ENCODE measurements at regions of chr6 and their contacts with region 1.

Region 1: DNA sequence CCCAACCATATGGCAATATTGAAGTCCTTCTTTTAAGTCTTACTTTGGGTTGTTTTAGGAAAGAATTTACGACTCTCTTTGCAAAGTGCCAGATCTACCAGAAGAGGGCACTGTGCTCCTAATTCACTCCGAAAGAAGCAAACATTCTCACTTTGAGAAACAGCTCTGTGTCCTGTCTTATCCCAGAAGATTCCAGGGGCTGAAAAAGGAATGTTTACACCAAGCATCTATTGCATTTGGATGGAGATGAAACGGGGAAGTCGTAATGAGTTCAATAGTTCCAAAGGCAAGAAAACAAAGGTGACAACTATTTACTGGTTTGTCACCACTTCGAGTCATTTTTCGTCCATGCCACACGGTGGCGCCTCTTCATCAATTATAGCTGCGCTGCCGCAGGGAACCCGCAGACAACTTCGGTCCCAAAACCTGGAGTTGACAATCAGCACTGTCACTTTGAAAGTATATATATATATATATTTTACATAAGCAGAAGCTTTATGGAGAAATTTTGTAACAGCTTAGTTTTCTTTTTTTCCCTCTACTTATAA is 121.6 kb downstream of the MOXD1 start:
- DNase-seq: peak; percentile 43
- H3K4me3 ChIP-seq: peak overlapping the region; percentile 49 to 78
- H3K27ac ChIP-seq: no peak overlapping the region
- H3K4me1 ChIP-seq: no peaks in the 10 kb centered on the region; a peak in 1 of 4 replicates
- H3K27me3 ChIP-seq: peaks cover 4% of the 10 kb centered on the region
- CTCF ChIP-seq: peak; percentile 98
- EP300 ChIP-seq: no peak
- RAD21 ChIP-seq: peak; percentile 69

Region 2: DNA sequence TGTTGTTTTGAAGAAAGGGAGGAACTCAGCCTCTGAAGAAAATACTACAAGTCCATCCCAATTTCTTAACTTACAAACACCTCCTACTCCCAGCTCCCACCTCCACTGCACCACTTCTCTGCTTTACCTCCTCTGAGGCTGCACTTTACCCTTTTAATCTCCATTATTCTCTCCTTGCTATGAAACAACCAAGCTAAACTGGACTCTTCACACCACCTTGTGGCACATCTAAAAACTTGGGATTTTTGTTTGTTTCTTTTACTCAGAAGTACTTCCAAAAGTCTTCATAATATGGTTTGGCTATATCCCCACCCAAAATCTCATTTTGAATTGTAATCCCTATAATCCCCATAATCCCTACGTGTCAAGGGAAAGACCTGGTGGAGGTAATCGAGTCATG is 20.6 kb before region 1 on chr6:
- CTCF ChIA-PET with region 1: interaction called, 114 read pairs
- POLR2A ChIA-PET with region 1: no interaction called
- DNase-seq: no peak
- H3K4me3 ChIP-seq: no peak overlapping the region
- H3K27ac ChIP-seq: no peak overlapping the region
- H3K4me1 ChIP-seq: no peaks in the 10 kb centered on the region
- H3K27me3 ChIP-seq: peaks cover 7% of the 10 kb centered on the region; the same call in 1 of the 2 replicates
- CTCF ChIP-seq: peak; percentile 54
- EP300 ChIP-seq: no peak
- RAD21 ChIP-seq: peak; percentile 24; the same call in 1 of the 2 replicates

Region 3: GRCh38 chr6:132320007-132320406 is 40.3 kb after region 1 on chr6:
- CTCF ChIA-PET with region 1: interaction called, 16 read pairs
- POLR2A ChIA-PET with region 1: no interaction called
- DNase-seq: no peak
- H3K4me3 ChIP-seq: no peak overlapping the region
- H3K27ac ChIP-seq: no peak overlapping the region; a peak in 1 of 4 replicates
- H3K4me1 ChIP-seq: no peaks in the 10 kb centered on the region; a peak in 1 of 4 replicates
- H3K27me3 ChIP-seq: no peaks in the 10 kb centered on the region
- CTCF ChIP-seq: no peak
- EP300 ChIP-seq: no peak
- RAD21 ChIP-seq: no peak

Region 4: GRCh38 chr6:132471788-132472187 is 192.1 kb after region 1 on chr6:
- CTCF ChIA-PET with region 1: interaction called, 44 read pairs
- POLR2A ChIA-PET with region 1: no interaction called
- DNase-seq: peak; percentile 19
- H3K4me3 ChIP-seq: no peak overlapping the region
- H3K27ac ChIP-seq: peak overlapping the region in 1 of 2 experiments; percentile 56; a peak in 2 of 4 replicates
- H3K4me1 ChIP-seq: peaks cover 0 to 12% of the 10 kb centered on the region in 2 experiments; a peak in 2 of 4 replicates
- H3K27me3 ChIP-seq: no peaks in the 10 kb centered on the region
- CTCF ChIP-seq: no peak
- EP300 ChIP-seq: peak in 1 of 2 experiments; percentile 36; a peak in 1 of 4 replicates
- RAD21 ChIP-seq: no peak

Region 5: DNA sequence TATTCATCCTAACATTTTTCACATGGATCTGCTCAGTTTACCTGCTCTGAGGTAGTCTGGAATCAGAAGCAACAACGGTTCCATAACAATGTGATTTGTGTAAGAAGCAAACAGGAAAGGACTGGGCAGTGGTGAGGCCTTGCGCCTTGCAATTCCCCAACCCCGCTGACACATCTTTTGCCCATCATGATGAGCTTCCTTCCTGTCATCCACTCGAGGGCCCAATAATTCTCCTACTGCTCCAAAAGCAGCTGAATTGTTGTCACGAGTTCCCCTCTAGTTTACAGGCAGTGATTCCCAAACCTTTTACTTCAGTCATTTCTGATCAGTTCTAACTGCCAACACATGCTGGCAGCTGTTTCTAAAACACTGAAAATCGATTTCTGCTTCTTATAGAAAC is 210.4 kb after region 1 on chr6:
- CTCF ChIA-PET with region 1: interaction called, 212 read pairs
- POLR2A ChIA-PET with region 1: no interaction called
- DNase-seq: no peak
- H3K4me3 ChIP-seq: no peak overlapping the region
- H3K27ac ChIP-seq: no peak overlapping the region
- H3K4me1 ChIP-seq: no peaks in the 10 kb centered on the region
- H3K27me3 ChIP-seq: no peaks in the 10 kb centered on the region
- CTCF ChIP-seq: no peak
- EP300 ChIP-seq: no peak
- RAD21 ChIP-seq: no peak

Region 6: GRCh38 chr6:132524646-132525045 is 245.0 kb after region 1 on chr6:
- CTCF ChIA-PET with region 1: interaction called, 10 read pairs
- POLR2A ChIA-PET with region 1: no interaction called
- DNase-seq: no peak
- H3K4me3 ChIP-seq: no peak overlapping the region
- H3K27ac ChIP-seq: no peak overlapping the region
- H3K4me1 ChIP-seq: no peaks in the 10 kb centered on the region
- H3K27me3 ChIP-seq: peaks cover 22% of the 10 kb centered on the region
- CTCF ChIP-seq: no peak
- EP300 ChIP-seq: no peak
- RAD21 ChIP-seq: no peak

Region 7: GRCh38 chr6:133360194-133360593 is 1080.5 kb after region 1 on chr6:
- CTCF ChIA-PET with region 1: no interaction called
- POLR2A ChIA-PET with region 1: no interaction called
- DNase-seq: no peak
- H3K4me3 ChIP-seq: no peak overlapping the region
- H3K27ac ChIP-seq: no peak overlapping the region
- H3K4me1 ChIP-seq: no peaks in the 10 kb centered on the region
- H3K27me3 ChIP-seq: no peaks in the 10 kb centered on the region
- CTCF ChIP-seq: no peak
- EP300 ChIP-seq: no peak
- RAD21 ChIP-seq: no peak